Endothelial cell of umbilical vein (primary cell): ENCODE measurements at regions of chr5 and their contacts with region 1.

Region 1: DNA sequence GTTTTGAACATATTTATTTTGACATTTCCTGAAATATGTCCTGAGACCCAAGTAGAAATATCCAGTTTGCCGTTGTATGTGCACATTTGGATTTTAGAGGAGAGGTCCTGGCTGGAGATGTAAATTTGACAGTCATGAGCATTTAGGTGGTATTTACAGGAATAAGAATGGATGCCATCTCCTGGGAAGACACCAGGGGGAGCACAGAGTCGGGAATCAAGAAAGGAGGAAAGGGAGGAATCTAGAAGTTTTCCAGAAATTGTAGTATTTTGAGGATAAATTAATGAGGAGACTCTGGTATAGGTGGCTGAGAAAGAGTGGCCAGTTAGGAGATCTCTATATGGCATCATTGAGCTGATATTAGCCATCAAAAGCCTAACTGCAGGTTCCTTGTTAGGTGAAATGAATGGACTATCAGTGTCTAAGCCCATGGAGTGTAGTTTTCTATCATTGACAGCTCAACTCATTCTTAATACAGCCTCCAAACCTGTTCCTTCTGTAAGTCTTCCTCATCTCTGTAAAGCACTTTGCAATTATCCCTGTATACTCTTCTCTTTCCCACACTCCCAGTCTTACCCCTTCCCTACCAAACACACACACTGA is 7.2 kb downstream of the GAPT start:
- DNase-seq: peak; percentile 65
- H3K4me3 ChIP-seq: no peak overlapping the region
- H3K27ac ChIP-seq: no peak overlapping the region
- H3K4me1 ChIP-seq: no peaks in the 10 kb centered on the region
- H3K27me3 ChIP-seq: peaks cover under 1 to 1% of the 10 kb centered on the region in 2 experiments
- CTCF ChIP-seq: peak; percentile 64 to 68
- POLR2A ChIP-seq: no peak

Region 2: GRCh38 chr5:58680503-58680902 is 182.1 kb after region 1 on chr5:
- CTCF ChIA-PET with region 1: interaction called, 10 read pairs
- POLR2A ChIA-PET with region 1: no interaction called
- dilution Hi-C with region 1: no loop called
- intact Hi-C with region 1: no loop called
- DNase-seq: peak; percentile 85
- H3K4me3 ChIP-seq: no peak overlapping the region
- H3K27ac ChIP-seq: peak overlapping the region; percentile 72
- H3K4me1 ChIP-seq: peaks cover 68% of the 10 kb centered on the region
- H3K27me3 ChIP-seq: no peaks in the 10 kb centered on the region
- CTCF ChIP-seq: no peak
- POLR2A ChIP-seq: peak; percentile 70

Region 3: GRCh38 chr5:58818462-58818861 is 320.0 kb after region 1 on chr5:
- CTCF ChIA-PET with region 1: interaction called, 110 read pairs
- POLR2A ChIA-PET with region 1: no interaction called
- dilution Hi-C with region 1: no loop called
- intact Hi-C with region 1: loop called (anchors 1 kb)
- DNase-seq: no peak
- H3K4me3 ChIP-seq: no peak overlapping the region
- H3K27ac ChIP-seq: no peak overlapping the region
- H3K4me1 ChIP-seq: no peaks in the 10 kb centered on the region
- H3K27me3 ChIP-seq: no peaks in the 10 kb centered on the region
- CTCF ChIP-seq: no peak
- POLR2A ChIP-seq: no peak